Mucosa of descending colon (tissue), 3 donors: ENCODE measurements at regions of chr6 and their contacts with region 1.

Region 1: GRCh38 chr6:123965894-123966293 is 162.2 kb downstream of the NKAIN2 start:
- DNase-seq: no peak
- ATAC-seq: no peak
- H3K4me3 ChIP-seq: no peak overlapping the region
- H3K4me1 ChIP-seq: no peaks in the 10 kb centered on the region
- CTCF ChIP-seq: no peak

Region 2: DNA sequence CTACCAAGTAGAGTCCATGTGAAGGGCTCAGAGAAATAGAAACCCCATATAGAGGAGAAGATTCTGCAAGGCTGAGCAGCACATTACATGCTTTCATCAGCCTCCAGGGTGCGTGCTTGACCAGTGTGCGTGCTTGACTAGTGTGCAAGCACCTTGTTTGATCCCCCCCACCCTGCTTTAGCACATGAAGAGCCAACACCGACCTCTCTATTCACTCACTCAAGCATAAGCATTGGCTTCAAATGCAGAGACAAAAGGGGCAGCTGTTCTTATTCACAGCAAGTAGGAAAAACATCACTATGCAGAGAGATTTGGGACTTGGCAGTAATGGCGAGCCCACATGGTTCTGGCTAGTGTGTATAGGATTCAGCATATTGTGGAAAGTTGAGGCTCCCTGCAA is 717.6 kb after region 1 on chr6:
- intact Hi-C with region 1: loop called in 1 of 2 experiments (anchors 5 kb)
- DNase-seq: no peak
- ATAC-seq: no peak
- H3K4me3 ChIP-seq: no peak overlapping the region
- H3K4me1 ChIP-seq: no peaks in the 10 kb centered on the region
- CTCF ChIP-seq: no peak